Lower leg skin (tissue), 4 donors: ENCODE measurements at regions of chr4 and their contacts with region 1.

Region 1: DNA sequence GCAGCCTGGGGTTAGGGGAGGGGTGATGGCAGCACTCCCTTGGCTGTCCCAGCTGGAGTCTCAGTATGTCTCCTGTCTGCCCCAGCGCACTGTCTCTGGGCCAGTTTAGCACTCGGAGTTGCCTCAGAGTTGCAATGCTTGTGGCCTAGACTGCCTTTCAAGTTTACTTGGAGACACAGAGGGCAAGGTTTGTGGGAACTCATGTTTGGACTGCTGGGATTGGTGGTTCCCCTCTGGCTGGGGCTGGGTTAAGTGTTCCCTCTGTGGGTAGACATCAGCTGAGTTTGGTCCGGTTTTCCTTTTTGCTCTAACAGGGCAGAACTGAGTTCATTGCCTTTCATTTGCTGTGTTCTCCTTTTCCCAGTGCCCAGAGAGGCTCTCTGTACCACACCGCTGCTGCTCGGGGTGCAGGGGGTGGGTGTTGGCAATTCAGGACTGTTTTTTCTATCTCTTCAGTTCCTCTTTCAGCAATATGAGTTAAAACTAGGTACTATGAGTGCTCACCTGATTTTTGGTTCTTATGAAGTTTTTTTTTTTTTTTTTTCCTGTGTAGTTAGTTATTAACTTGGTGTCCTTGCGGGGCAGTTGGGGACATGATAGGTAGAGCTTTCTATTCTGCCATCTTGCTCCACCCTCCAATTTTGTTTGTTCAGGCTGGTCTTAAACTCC is 17.2 kb downstream of the RAB33B start:
- DNase-seq: no peak
- H3K4me3 ChIP-seq: no peak overlapping the region
- CTCF ChIP-seq: no peak
- POLR2A ChIP-seq: no peak

Region 2: GRCh38 chr4:139441029-139441428 is 30.1 kb before region 1 on chr4:
- intact Hi-C with region 1: loop called (anchors 1 kb)
- DNase-seq: no peak
- H3K4me3 ChIP-seq: no peak overlapping the region
- CTCF ChIP-seq: no peak
- POLR2A ChIP-seq: no peak

Region 3: DNA sequence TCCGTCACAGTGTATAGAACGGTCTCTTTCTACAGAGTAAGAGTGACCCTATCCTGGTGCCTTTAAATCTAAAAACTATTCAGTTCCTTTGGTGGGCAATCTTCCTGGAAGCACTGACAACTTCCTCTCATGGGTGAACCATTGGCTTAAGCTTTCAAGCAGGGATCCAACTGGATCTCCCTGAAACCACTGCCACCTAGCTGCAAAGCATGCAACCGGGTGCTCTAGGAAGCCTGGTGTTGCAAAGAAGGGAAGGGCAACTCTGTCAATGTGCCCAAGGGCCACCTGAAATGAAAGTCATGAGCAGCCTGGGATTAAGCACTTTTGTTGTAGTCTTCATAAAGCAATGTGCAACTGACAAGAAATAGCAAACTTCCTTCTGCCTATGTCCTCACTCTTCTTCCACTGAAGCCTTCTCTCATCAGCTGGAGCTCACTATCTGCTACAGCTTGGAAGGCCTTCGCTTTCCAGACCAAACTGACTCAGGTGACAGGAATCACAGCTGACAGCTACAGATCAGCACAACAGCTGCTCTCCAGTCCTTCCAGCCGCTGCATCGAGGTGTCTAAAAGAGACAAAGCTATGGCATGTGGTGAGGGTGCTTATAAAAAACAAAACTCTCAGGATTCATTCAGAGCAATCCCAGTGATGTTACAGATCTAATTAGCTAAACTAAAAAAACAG is 38.7 kb after region 1 on chr4:
- intact Hi-C with region 1: no loop called
- DNase-seq: no peak
- H3K4me3 ChIP-seq: no peak overlapping the region
- CTCF ChIP-seq: no peak
- POLR2A ChIP-seq: no peak